B cell (primary cell): ENCODE measurements at regions of chr4 and their contacts with region 1.

Region 1: DNA sequence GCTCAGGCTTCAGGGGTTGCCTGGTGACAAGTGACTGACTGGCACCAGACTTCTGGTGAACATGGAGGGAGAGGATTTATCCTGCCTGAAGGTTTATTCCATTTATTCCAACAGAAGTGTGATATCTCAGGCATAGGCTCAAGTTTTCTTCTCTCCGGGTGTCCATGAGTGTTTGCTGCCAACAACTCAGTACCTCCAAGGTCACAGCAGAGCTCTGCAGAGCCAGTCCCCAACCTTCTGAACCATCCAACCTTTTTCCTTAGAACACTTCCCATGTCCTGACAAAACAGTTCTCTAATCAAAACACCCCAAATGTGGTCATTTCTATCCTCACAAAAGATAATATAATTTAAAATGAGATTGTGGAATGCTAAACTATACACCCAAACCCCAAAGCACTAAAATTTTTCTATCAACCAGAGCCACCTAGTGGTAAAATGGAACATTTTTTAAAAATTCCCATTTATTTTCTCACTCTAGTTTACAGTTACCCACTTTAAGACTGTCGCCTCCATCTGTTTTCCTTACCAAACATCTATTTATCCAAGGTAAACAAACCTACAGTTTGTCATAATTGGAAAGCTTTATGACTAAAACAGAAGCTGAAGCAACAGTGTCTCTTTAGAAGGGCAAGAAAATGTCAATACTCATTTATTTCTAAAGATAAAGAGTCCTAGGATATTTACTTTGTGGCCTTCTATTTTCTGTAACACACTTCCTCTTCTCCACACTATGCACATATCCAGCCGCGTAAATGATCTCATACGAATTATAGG is 39.6 kb downstream of the TMEM154 start:
- DNase-seq: peak; percentile 42
- ATAC-seq: no peak
- H3K4me3 ChIP-seq: no peak overlapping the region
- H3K4me3 Mint-ChIP-seq: no peak overlapping the region
- H3K27ac ChIP-seq: peak overlapping the region in 1 of 2 donors; percentile 7
- H3K27ac Mint-ChIP-seq: peak overlapping the region; percentile 10
- H3K4me1 ChIP-seq: peaks cover 30 to 35% of the 10 kb centered on the region in 2 donors
- H3K4me1 Mint-ChIP-seq: peaks cover 67% of the 10 kb centered on the region
- H3K27me3 ChIP-seq: no peaks in the 10 kb centered on the region
- H3K27me3 Mint-ChIP-seq: no peaks in the 10 kb centered on the region
- CTCF ChIP-seq: peak; percentile 79

Region 2: DNA sequence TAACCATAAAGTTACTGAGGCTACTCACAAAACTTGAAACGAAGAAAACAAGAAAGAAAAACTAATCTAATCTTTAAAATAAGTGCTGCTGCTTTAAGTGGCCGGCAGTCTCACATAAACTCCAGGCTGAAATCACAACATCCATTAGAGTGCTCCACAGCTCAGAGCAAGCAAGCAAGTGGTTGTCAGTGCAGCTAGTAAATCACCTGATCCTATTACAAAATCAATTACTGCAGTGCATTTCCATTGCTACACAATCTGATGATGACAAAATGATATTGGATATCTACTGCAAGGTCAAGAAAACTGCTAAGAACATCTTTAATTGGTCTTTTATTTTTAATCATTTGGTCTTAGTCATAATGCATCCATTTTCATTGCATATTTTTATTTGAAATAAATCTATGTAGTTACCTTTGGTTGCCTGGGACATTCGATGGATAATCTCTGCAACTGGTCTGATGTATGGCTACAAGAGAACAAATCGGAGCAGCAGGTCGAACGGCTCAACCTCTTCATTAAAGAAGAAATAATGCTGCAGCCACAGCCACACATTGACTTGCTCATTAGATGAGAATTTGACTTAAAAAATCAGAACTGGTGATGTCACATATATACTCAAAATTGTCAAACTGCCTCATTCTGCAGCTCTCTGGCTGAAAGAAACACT is 192.1 kb before region 1 on chr4:
- CTCF ChIA-PET with region 1: interaction called, 12 read pairs
- POLR2A ChIA-PET with region 1: no interaction called
- intact Hi-C with region 1: no loop called
- DNase-seq: no peak
- ATAC-seq: no peak
- H3K4me3 ChIP-seq: no peak overlapping the region
- H3K4me3 Mint-ChIP-seq: no peak overlapping the region
- H3K27ac ChIP-seq: no peak overlapping the region
- H3K27ac Mint-ChIP-seq: no peak overlapping the region
- H3K4me1 ChIP-seq: peaks cover 5 to 9% of the 10 kb centered on the region in 2 donors
- H3K4me1 Mint-ChIP-seq: peaks cover 13% of the 10 kb centered on the region
- H3K27me3 ChIP-seq: no peaks in the 10 kb centered on the region
- H3K27me3 Mint-ChIP-seq: no peaks in the 10 kb centered on the region
- CTCF ChIP-seq: no peak

Region 3: DNA sequence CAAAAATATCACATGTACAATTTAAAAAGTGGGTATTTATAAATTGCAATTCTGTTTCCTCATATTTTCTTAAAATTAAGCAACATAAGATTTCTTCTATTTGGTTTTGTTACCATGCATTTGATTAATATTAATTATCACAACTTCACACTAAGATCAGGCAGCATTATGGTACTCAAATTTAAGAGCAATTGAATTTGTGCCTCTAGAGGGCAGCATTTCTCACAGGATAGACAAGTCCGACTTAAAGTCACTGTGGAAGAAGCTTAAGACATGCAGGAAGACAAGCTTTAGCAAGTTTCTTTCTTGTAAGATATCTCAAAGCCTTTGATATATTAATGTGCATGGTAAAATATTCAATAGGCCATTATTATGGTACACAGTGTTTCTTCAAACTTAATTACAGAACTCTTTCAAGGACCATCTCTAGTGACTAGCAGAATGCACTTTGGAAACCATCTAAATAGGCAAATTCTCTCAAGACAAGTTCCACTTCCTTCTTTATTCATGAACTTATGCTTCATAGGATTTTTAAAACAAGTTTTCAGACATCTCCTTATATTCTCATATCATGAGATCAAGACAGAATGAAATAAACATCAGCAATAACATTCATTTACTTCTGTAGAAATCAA is 139.3 kb before region 1 on chr4:
- CTCF ChIA-PET with region 1: interaction called, 199 read pairs
- POLR2A ChIA-PET with region 1: no interaction called
- intact Hi-C with region 1: loop called (anchors 1 kb)
- DNase-seq: peak; percentile 88
- ATAC-seq: peak; percentile 75
- H3K4me3 ChIP-seq: no peak overlapping the region
- H3K4me3 Mint-ChIP-seq: peak overlapping the region; percentile 38
- H3K27ac ChIP-seq: peak overlapping the region in 1 of 2 donors; percentile 21
- H3K27ac Mint-ChIP-seq: peak overlapping the region; percentile 75
- H3K4me1 ChIP-seq: peaks cover 0 to 10% of the 10 kb centered on the region in 2 donors
- H3K4me1 Mint-ChIP-seq: peaks cover 31% of the 10 kb centered on the region
- H3K27me3 ChIP-seq: no peaks in the 10 kb centered on the region
- H3K27me3 Mint-ChIP-seq: no peaks in the 10 kb centered on the region
- CTCF ChIP-seq: peak; percentile 96

Region 4: DNA sequence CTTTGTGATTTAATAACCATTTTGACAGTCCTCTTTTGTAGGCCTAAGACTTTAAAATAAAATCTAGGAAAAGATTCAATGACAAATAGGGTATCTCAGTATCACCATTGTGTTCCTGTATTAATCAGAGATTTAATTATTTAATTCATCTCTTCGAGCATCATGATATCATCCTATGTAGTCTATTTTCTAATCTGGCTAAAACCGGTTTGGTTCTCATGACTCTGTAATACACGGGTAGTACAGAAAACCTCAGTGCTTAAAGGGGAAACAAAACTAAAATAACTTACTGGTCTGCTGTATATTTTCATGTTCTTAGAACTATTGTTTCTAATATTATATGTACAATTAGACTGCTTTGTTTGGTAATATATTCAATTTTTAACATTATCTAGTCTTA is 80.6 kb before region 1 on chr4:
- CTCF ChIA-PET with region 1: no interaction called
- POLR2A ChIA-PET with region 1: no interaction called
- intact Hi-C with region 1: loop called (anchors 5 kb)
- DNase-seq: no peak
- ATAC-seq: no peak
- H3K4me3 ChIP-seq: no peak overlapping the region
- H3K4me3 Mint-ChIP-seq: no peak overlapping the region
- H3K27ac ChIP-seq: no peak overlapping the region
- H3K27ac Mint-ChIP-seq: no peak overlapping the region
- H3K4me1 ChIP-seq: peaks cover 6% of the 10 kb centered on the region in 2 donors
- H3K4me1 Mint-ChIP-seq: peaks cover 39% of the 10 kb centered on the region
- H3K27me3 ChIP-seq: no peaks in the 10 kb centered on the region
- H3K27me3 Mint-ChIP-seq: no peaks in the 10 kb centered on the region
- CTCF ChIP-seq: no peak

Region 5: GRCh38 chr4:152663203-152664066 is 23.2 kb after region 1 on chr4:
- CTCF ChIA-PET with region 1: interaction called, 8 read pairs
- POLR2A ChIA-PET with region 1: interaction called, 11 read pairs
- intact Hi-C with region 1: loop called (anchors 1 kb)
- DNase-seq: peak; percentile 82
- ATAC-seq: peak; percentile 67
- H3K4me3 ChIP-seq: peak overlapping the region; percentile 30 to 55 (median 52)
- H3K4me3 Mint-ChIP-seq: peak overlapping the region; percentile 77
- H3K27ac ChIP-seq: peak overlapping the region; percentile 84
- H3K27ac Mint-ChIP-seq: peak overlapping the region; percentile 89
- H3K4me1 ChIP-seq: peaks cover 94% of the 10 kb centered on the region in 2 donors
- H3K4me1 Mint-ChIP-seq: peaks cover 91% of the 10 kb centered on the region
- H3K27me3 ChIP-seq: no peaks in the 10 kb centered on the region
- H3K27me3 Mint-ChIP-seq: no peaks in the 10 kb centered on the region
- CTCF ChIP-seq: no peak

Region 6: DNA sequence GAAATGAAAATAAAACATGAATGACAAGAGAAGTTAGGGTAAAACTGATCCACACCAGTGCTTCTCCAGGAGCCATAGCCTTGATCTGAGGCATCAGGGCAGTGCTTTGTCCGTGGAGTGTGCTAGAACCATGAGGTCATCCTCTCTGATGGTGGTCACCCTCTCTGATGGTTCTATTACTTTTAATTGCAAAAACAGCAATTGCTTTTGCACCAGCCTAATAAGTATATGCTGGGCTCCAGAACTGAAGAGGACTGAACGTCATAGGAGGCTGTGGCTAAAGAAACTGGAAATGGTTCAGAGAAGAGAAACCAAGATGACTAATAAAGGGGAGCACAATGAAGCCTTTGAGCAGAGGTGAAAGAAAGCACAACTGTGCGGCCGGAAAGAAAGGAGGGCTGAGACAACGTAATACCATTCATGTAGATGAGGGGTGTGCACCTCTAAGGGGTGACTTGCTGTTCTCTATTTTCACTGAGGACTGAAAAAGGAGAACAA is 56.6 kb after region 1 on chr4:
- CTCF ChIA-PET with region 1: no interaction called
- POLR2A ChIA-PET with region 1: no interaction called
- intact Hi-C with region 1: loop called (anchors 2 kb)
- DNase-seq: peak; percentile 86
- ATAC-seq: peak; percentile 99
- H3K4me3 ChIP-seq: no peak overlapping the region
- H3K4me3 Mint-ChIP-seq: peak overlapping the region; percentile 55
- H3K27ac ChIP-seq: peak overlapping the region; percentile 55 to 62
- H3K27ac Mint-ChIP-seq: peak overlapping the region; percentile 91
- H3K4me1 ChIP-seq: peaks cover 17 to 30% of the 10 kb centered on the region in 2 donors
- H3K4me1 Mint-ChIP-seq: peaks cover 43% of the 10 kb centered on the region
- H3K27me3 ChIP-seq: no peaks in the 10 kb centered on the region
- H3K27me3 Mint-ChIP-seq: no peaks in the 10 kb centered on the region
- CTCF ChIP-seq: no peak

Region 7: DNA sequence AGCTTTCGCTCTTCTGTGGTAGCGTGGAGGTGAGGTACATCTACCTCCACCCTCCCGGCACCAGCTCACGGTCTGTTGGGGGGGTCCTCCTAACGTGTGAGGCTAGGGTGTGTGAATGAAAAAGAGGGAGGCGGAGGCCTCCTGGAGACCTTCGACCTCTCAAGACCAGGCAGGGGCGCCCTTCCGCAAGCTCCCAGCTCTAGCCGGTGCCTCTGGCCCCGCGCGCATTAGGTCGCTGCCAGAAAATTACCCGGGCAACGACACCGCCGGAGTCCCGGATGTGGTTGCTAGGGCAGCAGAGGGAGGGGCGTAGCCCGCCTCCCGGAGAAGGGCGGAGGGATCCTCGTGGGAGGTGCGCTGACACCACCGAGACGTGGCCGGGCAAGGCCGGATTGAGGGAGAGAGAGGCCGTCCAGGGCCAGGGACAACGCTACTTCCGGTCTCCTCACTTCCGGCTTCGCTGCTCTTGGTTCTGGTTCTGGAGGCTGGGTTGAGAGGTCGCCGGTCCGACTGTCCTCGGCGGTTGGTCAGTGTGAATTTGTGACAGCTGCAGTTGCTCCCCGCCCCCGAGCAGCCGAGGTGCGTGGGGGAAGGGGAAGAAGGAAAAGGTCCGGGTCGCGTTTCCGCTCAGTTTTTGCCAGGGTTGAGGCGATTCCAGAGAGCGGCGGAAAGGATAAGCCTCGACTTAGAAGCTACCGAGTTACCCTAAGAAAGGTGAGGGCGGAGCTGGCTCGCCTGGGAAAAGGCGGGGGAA is 139.4 kb after region 1 on chr4 and contains the starts of genes ARFIP1 and TIGD4:
- CTCF ChIA-PET with region 1: interaction called, 3 read pairs
- POLR2A ChIA-PET with region 1: interaction called, 10 read pairs
- intact Hi-C with region 1: loop called (anchors 5 kb)
- DNase-seq: peak; percentile 95
- ATAC-seq: peak; percentile 89
- H3K4me3 ChIP-seq: peak within 1 kb of the TSS; percentile 59 to 95 (median 90)
- H3K4me3 Mint-ChIP-seq: peak within 1 kb of the TSS; percentile 98
- H3K27ac ChIP-seq: peak within 1 kb of the TSS; percentile 60 to 79
- H3K27ac Mint-ChIP-seq: peak within 1 kb of the TSS; percentile 93
- H3K4me1 ChIP-seq: peaks cover 20 to 25% of the 10 kb centered on the region in 2 donors
- H3K4me1 Mint-ChIP-seq: peaks cover 51% of the 10 kb centered on the region
- H3K27me3 ChIP-seq: no peaks in the 10 kb centered on the region
- H3K27me3 Mint-ChIP-seq: peaks cover 5% of the 10 kb centered on the region
- CTCF ChIP-seq: peak; percentile 9
- total RNA-seq, gene ARFIP1: 23.5 and 27.0 TPM in 2 replicates
- total RNA-seq, gene TIGD4: 0.36 and 0.59 TPM in 2 replicates

Region 8: DNA sequence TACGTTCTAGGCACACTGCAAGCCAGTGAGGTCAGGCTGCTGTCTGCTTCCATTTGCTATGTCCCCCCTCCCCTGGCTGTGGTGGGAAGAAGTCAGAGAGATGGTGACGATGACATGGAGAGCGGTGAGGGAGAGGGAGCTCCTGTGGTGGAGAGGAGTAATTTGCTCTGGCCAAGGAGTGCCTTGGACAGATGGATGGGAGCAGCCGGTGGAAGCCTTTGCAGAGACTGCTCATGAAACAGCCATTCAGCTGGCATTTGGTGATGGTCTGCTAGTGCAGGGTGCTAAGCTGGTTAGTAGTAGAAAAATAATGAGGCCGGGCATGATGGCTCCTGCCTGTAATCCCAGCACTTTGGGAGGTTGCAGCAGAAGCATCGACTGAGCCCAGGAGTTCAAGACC is 419.9 kb after region 1 on chr4:
- CTCF ChIA-PET with region 1: no interaction called
- POLR2A ChIA-PET with region 1: no interaction called
- intact Hi-C with region 1: no loop called
- DNase-seq: no peak
- ATAC-seq: no peak
- H3K4me3 ChIP-seq: no peak overlapping the region
- H3K4me3 Mint-ChIP-seq: no peak overlapping the region
- H3K27ac ChIP-seq: no peak overlapping the region
- H3K27ac Mint-ChIP-seq: no peak overlapping the region
- H3K4me1 ChIP-seq: peaks cover 0 to 4% of the 10 kb centered on the region in 2 donors
- H3K4me1 Mint-ChIP-seq: peaks cover 4% of the 10 kb centered on the region
- H3K27me3 ChIP-seq: peaks cover 0 to 13% (median 11%) of the 10 kb centered on the region in 4 experiments
- H3K27me3 Mint-ChIP-seq: peaks cover 34% of the 10 kb centered on the region
- CTCF ChIP-seq: no peak